ENCODE measurements at regions of chr14 and their contacts with region 1.

Region 1: GRCh38 chr14:101552786-101553231 is 8.5 kb upstream of the DIO3 start:
- DNase-seq: no peak
- H3K4me3 ChIP-seq: no peak overlapping the region
- H3K27ac ChIP-seq: no peak overlapping the region
- H3K4me1 ChIP-seq: peaks cover 21% of the 10 kb centered on the region
- H3K27me3 ChIP-seq: no peaks in the 10 kb centered on the region
- CTCF ChIP-seq: no peak
- POLR2A ChIP-seq: no peak

Region 2: GRCh38 chr14:101598571-101599233 is 45.9 kb after region 1 on chr14:
- intact Hi-C with region 1: loop called (anchors 1 kb)
- DNase-seq: peak in 1 of 2 donors; percentile 82
- H3K4me3 ChIP-seq: no peak overlapping the region
- H3K27ac ChIP-seq: no peak overlapping the region
- H3K4me1 ChIP-seq: no peaks in the 10 kb centered on the region
- H3K27me3 ChIP-seq: no peaks in the 10 kb centered on the region
- CTCF ChIP-seq: no peak
- POLR2A ChIP-seq: no peak